ENCODE measurements at regions of chr9 and their contacts with region 1.

Region 1: DNA sequence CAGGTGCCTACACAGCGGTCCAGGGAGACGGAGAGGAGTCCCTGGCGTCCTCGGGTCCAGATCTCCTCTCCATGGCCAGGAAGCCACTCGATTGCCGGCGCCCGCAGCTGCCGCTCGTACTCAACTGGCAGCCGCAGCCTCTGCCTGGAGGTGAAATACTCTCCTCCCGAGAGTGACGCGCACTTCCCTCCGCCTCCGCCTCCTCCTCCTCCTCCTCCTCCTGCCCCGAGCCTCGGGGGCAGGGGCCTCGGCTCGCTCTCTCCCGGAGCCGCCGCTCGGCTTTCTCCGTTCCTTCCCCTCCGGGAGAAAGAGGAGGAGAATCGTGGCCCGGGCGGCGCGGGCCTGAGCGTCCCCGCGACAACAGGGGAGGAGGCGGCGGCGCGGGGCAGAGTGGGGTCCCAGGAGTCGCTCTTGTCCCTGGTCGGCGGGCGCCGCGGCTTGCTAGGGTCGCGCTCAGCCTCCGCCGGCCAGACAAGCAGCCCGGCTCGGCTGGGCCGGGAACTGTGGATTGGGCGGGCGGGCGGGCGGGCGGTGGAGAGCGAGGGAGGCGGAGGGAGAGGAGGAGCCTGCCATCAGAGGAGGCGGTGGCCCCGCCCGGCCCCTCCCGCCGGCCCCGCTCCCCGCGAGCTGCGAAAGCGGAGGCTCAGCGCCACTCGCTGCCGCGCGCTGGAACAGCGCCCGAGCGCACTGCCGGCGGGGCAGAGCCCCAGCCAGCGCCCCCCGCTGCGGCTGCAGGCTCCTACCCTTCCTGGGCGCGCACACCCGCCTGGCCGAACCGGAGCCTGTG is at the start of gene CEMIP2:
- DNase-seq: peak; percentile 95
- H3K4me3 ChIP-seq: peak within 1 kb of the TSS; percentile 76 to 92 (median 82)
- H3K27ac ChIP-seq: peak within 1 kb of the TSS; percentile 91 to 98 (median 95)
- H3K4me1 ChIP-seq: peaks cover 0 to 47% (median 39%) of the 10 kb centered on the region in 4 donors
- H3K27me3 ChIP-seq: no peaks in the 10 kb centered on the region
- CTCF ChIP-seq: peak in 1 of 4 experiments; percentile 37
- EP300 ChIP-seq: no peak
- POLR2A ChIP-seq: peak; percentile 84 to 91
- total RNA-seq, gene CEMIP2: 17.9 to 90.4 (median 28.8) TPM

Region 2: GRCh38 chr9:71604197-71605063 is 164.2 kb before region 1 on chr9:
- intact Hi-C with region 1: loop called (anchors 1 kb)
- DNase-seq: peak; percentile 83
- H3K4me3 ChIP-seq: no peak overlapping the region
- H3K27ac ChIP-seq: no peak overlapping the region
- H3K4me1 ChIP-seq: no peaks in the 10 kb centered on the region
- H3K27me3 ChIP-seq: no peaks in the 10 kb centered on the region
- CTCF ChIP-seq: peak; percentile 54 to 71 (median 61)
- EP300 ChIP-seq: no peak
- POLR2A ChIP-seq: no peak

Region 3: GRCh38 chr9:71683598-71684235 is 84.9 kb before region 1 on chr9:
- intact Hi-C with region 1: loop called (anchors 5 kb)
- DNase-seq: no peak
- H3K4me3 ChIP-seq: no peak overlapping the region
- H3K27ac ChIP-seq: no peak overlapping the region
- H3K4me1 ChIP-seq: peaks cover 0 to 40% (median 28%) of the 10 kb centered on the region in 4 donors
- H3K27me3 ChIP-seq: no peaks in the 10 kb centered on the region
- CTCF ChIP-seq: peak in 3 of 4 experiments; percentile 17 to 38 (median 30)
- EP300 ChIP-seq: no peak
- POLR2A ChIP-seq: no peak

Region 4: GRCh38 chr9:71719562-71719961 is 49.0 kb before region 1 on chr9:
- intact Hi-C with region 1: loop called (anchors 2 kb)
- DNase-seq: no peak
- H3K4me3 ChIP-seq: no peak overlapping the region
- H3K27ac ChIP-seq: peak overlapping the region in 3 of 4 donors; percentile 27 to 69 (median 61)
- H3K4me1 ChIP-seq: peaks cover 0 to 15% (median 9%) of the 10 kb centered on the region in 4 donors
- H3K27me3 ChIP-seq: no peaks in the 10 kb centered on the region
- CTCF ChIP-seq: no peak
- EP300 ChIP-seq: peak in 2 of 4 donors; percentile 43 to 76
- POLR2A ChIP-seq: no peak

Region 5: DNA sequence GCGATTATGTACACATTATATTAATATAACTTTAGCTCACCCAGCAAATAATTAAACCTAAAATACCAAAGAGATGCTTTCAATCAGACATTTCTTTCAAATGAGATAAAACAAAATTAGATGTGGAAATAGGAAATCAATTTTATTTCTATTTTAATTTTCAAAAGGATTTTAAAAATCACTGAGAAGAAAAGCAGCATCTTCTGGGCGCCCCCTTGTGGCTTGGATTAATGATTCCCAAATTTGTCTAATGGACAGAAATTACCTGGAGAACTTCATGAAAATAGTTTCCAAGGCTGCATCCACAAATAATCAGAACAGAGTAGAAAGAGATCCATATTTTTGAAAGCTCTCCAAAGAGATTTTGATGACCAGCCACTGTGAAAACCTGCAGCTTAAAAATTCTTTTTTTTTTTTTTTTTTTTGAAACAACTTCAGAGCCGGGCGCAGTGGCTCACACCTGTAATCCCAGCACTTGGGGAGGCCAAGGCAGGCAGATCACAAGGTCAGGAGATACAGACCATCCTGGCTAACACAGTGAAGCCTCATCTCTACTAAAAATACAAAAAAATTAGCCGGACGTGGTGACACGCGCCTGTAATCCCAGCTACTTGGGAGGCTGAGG is 50.6 kb after region 1 on chr9:
- intact Hi-C with region 1: loop called (anchors 5 kb)
- DNase-seq: no peak
- H3K4me3 ChIP-seq: no peak overlapping the region
- H3K27ac ChIP-seq: no peak overlapping the region
- H3K4me1 ChIP-seq: no peaks in the 10 kb centered on the region
- H3K27me3 ChIP-seq: no peaks in the 10 kb centered on the region
- CTCF ChIP-seq: peak; percentile 12 to 69 (median 44)
- EP300 ChIP-seq: no peak
- POLR2A ChIP-seq: no peak

Region 6: GRCh38 chr9:71911253-71912074 is 142.9 kb after region 1 on chr9 and contains the start of gene C9orf85:
- intact Hi-C with region 1: loop called (anchors 2 kb)
- DNase-seq: peak; percentile 99
- H3K4me3 ChIP-seq: peak within 1 kb of the TSS; percentile 83 to 98 (median 90)
- H3K27ac ChIP-seq: peak within 1 kb of the TSS; percentile 92 to 97 (median 96)
- H3K4me1 ChIP-seq: peaks cover 0 to 34% (median 27%) of the 10 kb centered on the region in 4 donors
- H3K27me3 ChIP-seq: no peaks in the 10 kb centered on the region
- CTCF ChIP-seq: no peak
- EP300 ChIP-seq: no peak
- POLR2A ChIP-seq: peak in 1 of 2 donors; percentile 16
- total RNA-seq, gene C9orf85: 8.8 to 13.3 (median 12.2) TPM